Endothelial cell of umbilical vein (primary cell): ENCODE measurements at regions of chr2 and their contacts with region 1.

Region 1: GRCh38 chr2:119476301-119477021 is 44.8 kb downstream of the TMEM37 start:
- DNase-seq: peak; percentile 71
- H3K4me3 ChIP-seq: no peak overlapping the region
- H3K27ac ChIP-seq: no peak overlapping the region
- H3K4me1 ChIP-seq: no peaks in the 10 kb centered on the region
- H3K27me3 ChIP-seq: peaks cover 0 to 3% of the 10 kb centered on the region in 2 experiments
- CTCF ChIP-seq: peak; percentile 93 to 97
- POLR2A ChIP-seq: no peak

Region 2: GRCh38 chr2:118882709-118883210 is 593.7 kb before region 1 on chr2:
- CTCF ChIA-PET with region 1: interaction called, 18 read pairs
- POLR2A ChIA-PET with region 1: no interaction called
- dilution Hi-C with region 1: no loop called
- intact Hi-C with region 1: loop called (anchors 5 kb)
- DNase-seq: peak; percentile 35
- H3K4me3 ChIP-seq: no peak overlapping the region
- H3K27ac ChIP-seq: no peak overlapping the region
- H3K4me1 ChIP-seq: no peaks in the 10 kb centered on the region
- H3K27me3 ChIP-seq: no peaks in the 10 kb centered on the region
- CTCF ChIP-seq: peak; percentile 70 to 91
- POLR2A ChIP-seq: no peak

Region 3: DNA sequence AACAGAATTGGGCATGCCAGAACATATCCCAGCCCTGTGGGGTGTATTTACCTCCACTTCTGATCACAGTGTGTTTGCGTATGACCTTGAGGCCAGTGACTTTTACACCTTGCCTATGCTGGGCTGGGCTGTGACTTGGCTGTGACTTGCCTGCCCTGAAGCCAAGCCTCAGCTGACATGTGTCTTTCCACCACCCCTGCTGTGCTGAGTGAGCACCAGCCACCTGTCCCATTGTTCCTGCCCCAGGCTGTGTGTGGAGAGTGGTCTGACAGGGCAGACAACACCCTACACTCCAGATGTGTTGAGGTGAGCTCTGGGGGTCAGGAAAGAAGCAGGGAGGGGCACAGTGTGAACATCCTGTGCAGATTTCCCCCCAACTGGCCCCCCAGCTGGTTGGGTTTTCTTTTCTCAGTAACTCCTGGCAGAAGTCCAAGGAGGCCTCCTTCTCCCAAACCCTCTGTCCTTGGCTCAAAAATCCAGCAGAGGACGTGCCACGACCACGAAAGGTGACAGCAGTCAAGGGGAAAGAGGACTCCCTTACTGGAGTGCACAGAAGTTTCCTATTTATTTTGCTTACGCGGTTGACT is 257.9 kb before region 1 on chr2:
- CTCF ChIA-PET with region 1: interaction called, 4 read pairs
- POLR2A ChIA-PET with region 1: no interaction called
- dilution Hi-C with region 1: no loop called
- intact Hi-C with region 1: loop called (anchors 5 kb)
- DNase-seq: peak; percentile 16
- H3K4me3 ChIP-seq: no peak overlapping the region
- H3K27ac ChIP-seq: no peak overlapping the region
- H3K4me1 ChIP-seq: peaks cover 2% of the 10 kb centered on the region
- H3K27me3 ChIP-seq: no peaks in the 10 kb centered on the region
- CTCF ChIP-seq: peak in 1 of 2 donors; percentile 11
- POLR2A ChIP-seq: no peak

Region 4: DNA sequence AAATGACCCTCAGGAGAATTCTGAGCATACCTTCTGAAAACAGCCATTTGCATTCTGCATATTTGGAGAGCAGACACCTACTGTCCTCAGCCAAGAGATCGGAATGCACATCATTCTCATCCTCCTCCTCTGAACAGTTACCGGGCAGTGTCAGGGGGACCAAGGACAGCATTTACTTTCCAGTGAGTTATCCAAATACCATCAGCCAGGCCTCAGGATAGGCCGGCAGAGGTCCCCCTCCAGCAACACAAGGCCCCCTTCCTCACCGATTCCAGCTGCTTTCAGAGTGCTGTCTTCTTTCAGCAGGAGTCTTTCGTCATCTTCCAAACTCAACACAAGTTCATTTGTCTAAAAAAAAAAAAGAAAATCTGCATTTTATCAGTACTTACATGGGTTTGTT is 165.1 kb before region 1 on chr2:
- CTCF ChIA-PET with region 1: no interaction called
- POLR2A ChIA-PET with region 1: no interaction called
- dilution Hi-C with region 1: no loop called
- intact Hi-C with region 1: loop called (anchors 5 kb)
- DNase-seq: no peak
- H3K4me3 ChIP-seq: no peak overlapping the region
- H3K27ac ChIP-seq: no peak overlapping the region
- H3K4me1 ChIP-seq: no peaks in the 10 kb centered on the region
- H3K27me3 ChIP-seq: no peaks in the 10 kb centered on the region
- CTCF ChIP-seq: no peak
- POLR2A ChIP-seq: no peak

Region 5: GRCh38 chr2:119414894-119415293 is 61.6 kb before region 1 on chr2:
- CTCF ChIA-PET with region 1: interaction called, 151 read pairs
- POLR2A ChIA-PET with region 1: no interaction called
- dilution Hi-C with region 1: no loop called
- intact Hi-C with region 1: no loop called
- DNase-seq: no peak
- H3K4me3 ChIP-seq: no peak overlapping the region
- H3K27ac ChIP-seq: no peak overlapping the region
- H3K4me1 ChIP-seq: no peaks in the 10 kb centered on the region
- H3K27me3 ChIP-seq: peaks cover 12 to 21% of the 10 kb centered on the region in 2 experiments
- CTCF ChIP-seq: no peak
- POLR2A ChIP-seq: no peak

Region 6: DNA sequence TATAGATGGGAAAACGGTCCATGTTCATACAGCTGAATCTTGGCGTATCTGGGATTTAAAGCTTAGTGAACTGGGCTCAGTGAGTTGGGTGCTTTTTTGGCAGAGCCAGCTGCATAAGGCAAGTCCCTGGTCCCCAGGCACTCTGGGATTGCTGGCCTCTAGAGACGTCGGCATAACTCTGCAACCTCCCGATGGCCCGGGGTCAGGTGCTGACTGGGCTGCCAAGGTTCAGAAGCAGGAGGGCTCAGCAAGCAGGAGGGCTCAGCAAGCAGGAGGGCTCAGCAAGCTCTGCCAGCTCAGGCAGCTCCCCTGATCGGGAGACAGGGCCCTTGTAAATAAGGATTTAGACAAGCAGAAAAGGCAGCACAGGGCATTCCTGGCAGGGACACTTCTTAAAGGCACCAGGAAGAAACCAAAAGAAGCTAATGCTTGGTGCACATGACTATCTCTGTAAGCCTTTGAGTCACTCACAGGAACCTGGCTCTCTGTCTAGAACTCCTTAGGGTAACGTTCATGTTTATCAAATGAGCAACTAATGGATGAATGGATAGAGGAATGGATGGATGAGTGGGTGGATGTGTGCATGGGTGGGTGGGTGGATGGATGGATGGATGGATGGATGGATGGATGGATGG is 16.5 kb before region 1 on chr2:
- CTCF ChIA-PET with region 1: interaction called, 13 read pairs
- POLR2A ChIA-PET with region 1: no interaction called
- dilution Hi-C with region 1: no loop called
- intact Hi-C with region 1: no loop called
- DNase-seq: no peak
- H3K4me3 ChIP-seq: no peak overlapping the region
- H3K27ac ChIP-seq: no peak overlapping the region
- H3K4me1 ChIP-seq: peaks cover 17% of the 10 kb centered on the region
- H3K27me3 ChIP-seq: no peaks in the 10 kb centered on the region
- CTCF ChIP-seq: no peak
- POLR2A ChIP-seq: no peak

Region 7: GRCh38 chr2:119487434-119488244 is 11.2 kb after region 1 on chr2:
- CTCF ChIA-PET with region 1: interaction called, 31 read pairs
- POLR2A ChIA-PET with region 1: no interaction called
- dilution Hi-C with region 1: no loop called
- intact Hi-C with region 1: no loop called
- DNase-seq: no peak
- H3K4me3 ChIP-seq: no peak overlapping the region
- H3K27ac ChIP-seq: no peak overlapping the region
- H3K4me1 ChIP-seq: peaks cover 3% of the 10 kb centered on the region
- H3K27me3 ChIP-seq: peaks cover 0 to 1% of the 10 kb centered on the region in 2 experiments
- CTCF ChIP-seq: no peak
- POLR2A ChIP-seq: no peak

Region 8: DNA sequence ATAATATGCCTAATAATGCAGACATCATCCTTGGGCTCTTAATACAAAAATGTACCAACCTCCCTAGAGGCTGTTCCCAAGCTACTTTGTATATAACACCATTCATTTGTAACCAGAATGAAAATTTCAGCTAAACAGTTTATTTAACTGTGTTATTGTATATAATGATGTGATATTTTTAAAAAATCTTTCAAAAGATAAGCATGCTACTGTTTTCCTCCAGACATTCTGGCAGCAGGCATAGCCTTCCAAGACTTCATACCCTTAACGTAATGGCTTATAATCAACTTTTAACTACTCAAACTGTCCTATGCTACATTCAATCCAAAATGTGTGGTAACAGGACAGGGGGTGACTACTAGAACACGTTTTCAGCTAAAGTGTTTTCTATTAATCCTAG is 89.0 kb after region 1 on chr2:
- CTCF ChIA-PET with region 1: no interaction called
- POLR2A ChIA-PET with region 1: no interaction called
- dilution Hi-C with region 1: no loop called
- intact Hi-C with region 1: no loop called
- DNase-seq: no peak
- H3K4me3 ChIP-seq: no peak overlapping the region
- H3K27ac ChIP-seq: no peak overlapping the region
- H3K4me1 ChIP-seq: no peaks in the 10 kb centered on the region
- H3K27me3 ChIP-seq: peaks cover 0 to 4% of the 10 kb centered on the region in 2 experiments
- CTCF ChIP-seq: no peak
- POLR2A ChIP-seq: no peak